Left ventricle myocardium inferior (tissue), 1 donor: ENCODE measurements at regions of chr7 and their contacts with region 1.

Region 1: GRCh38 chr7:55996856-55997500 is 32.6 kb downstream of the NIPSNAP2 start:
- DNase-seq: no peak
- H3K4me3 ChIP-seq: no peak overlapping the region
- H3K27ac ChIP-seq: no peak overlapping the region
- H3K4me1 ChIP-seq: no peaks in the 10 kb centered on the region
- H3K27me3 ChIP-seq: no peaks in the 10 kb centered on the region
- CTCF ChIP-seq: no peak

Region 2: DNA sequence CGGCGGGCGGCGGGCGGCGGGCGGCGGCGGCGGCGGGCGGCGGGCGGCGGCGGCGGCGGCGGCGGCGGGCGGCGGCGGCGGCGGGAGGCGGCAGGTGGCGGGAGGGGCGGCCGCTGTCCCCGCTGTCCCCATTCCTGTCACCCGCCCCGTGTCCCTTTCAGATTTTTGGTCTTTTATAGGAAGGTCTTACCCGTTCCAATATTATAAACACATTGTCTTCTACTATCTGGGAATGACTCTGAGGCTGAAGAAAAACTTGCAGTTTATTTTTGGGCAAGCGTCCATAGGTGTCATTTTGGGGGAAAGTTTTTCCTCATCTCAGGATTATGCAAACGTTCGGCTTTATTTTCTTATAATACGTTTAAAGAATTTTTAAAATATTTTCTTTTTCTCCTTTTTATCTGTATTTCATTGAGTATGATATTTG is 109.1 kb before region 1 on chr7:
- intact Hi-C with region 1: no loop called
- DNase-seq: no peak
- H3K4me3 ChIP-seq: peak overlapping the region; percentile 70
- H3K27ac ChIP-seq: peak overlapping the region; percentile 83
- H3K4me1 ChIP-seq: peaks cover 13% of the 10 kb centered on the region
- H3K27me3 ChIP-seq: no peaks in the 10 kb centered on the region
- CTCF ChIP-seq: no peak

Region 3: DNA sequence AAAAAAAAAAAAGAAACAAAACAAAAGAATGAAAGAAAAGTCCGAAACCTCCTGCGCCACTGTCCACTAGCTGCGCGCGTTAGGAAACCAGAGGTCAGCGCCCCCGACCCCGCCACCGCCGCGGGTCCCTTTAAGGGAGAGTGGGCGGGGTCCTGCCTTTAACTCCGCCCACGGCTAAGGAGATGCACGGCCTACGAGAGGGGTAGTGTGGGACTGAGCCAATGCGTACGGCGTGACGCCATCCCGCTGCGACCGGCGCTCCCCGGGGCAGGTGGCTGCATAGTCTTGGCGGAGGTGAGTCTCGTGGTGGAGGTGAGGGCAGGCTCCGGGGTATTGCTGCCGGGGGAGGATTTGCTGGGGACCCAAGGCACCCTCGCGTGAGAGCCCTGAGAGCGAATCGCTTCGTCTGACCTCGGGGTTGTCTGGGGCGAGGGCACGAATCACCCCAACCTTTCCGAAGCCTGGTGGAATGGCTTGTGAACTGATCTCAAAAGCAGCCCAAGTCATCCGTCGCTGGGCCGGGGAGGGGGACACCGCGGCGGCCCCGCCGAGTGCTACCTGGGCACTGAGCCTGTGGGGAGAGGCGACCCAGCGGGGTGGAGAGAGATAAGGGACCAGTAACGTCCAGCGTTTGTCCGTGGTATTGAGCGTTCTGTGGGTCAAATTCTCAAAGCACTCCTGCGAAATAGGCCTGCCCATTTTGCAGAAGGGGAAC is 45.2 kb before region 1 on chr7 and contains the start of gene MRPS17:
- intact Hi-C with region 1: no loop called
- DNase-seq: peak; percentile 91
- H3K4me3 ChIP-seq: peak within 1 kb of the TSS; percentile 83
- H3K27ac ChIP-seq: peak within 1 kb of the TSS; percentile 84
- H3K4me1 ChIP-seq: peaks cover 24% of the 10 kb centered on the region
- H3K27me3 ChIP-seq: no peaks in the 10 kb centered on the region
- CTCF ChIP-seq: no peak
- total RNA-seq, gene MRPS17: 19.4 TPM

Region 4: DNA sequence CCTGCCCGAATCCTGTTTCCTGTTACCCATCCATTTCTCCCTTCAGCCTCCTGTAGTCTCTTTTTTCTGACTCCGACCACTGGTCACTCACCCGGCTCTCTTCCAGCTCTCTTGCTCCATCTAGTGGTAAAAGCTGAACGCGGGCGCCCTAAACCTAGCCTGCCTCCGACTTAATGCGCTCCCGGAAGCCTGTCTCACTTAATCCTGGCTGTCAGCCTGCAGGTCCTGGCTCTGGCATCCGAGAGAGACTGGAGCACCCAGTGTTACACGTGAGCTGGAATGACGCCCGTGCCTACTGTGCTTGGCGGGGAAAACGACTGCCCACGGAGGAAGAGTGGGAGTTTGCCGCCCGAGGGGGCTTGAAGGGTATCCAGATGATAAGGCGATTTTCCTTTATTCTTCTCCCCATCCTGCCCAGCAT is 77.4 kb after region 1 on chr7:
- intact Hi-C with region 1: loop called (anchors 5 kb)
- DNase-seq: peak; percentile 84
- H3K4me3 ChIP-seq: no peak overlapping the region
- H3K27ac ChIP-seq: peak overlapping the region; percentile 42
- H3K4me1 ChIP-seq: peaks cover 25% of the 10 kb centered on the region
- H3K27me3 ChIP-seq: no peaks in the 10 kb centered on the region
- CTCF ChIP-seq: peak; percentile 97